SK-N-SH (cell line): ENCODE measurements at regions of chr14 and their contacts with region 1.

Region 1: GRCh38 chr14:49497725-49498348 is 88.3 kb downstream of the RPS29 start:
- DNase-seq: peak; percentile 52
- H3K4me3 ChIP-seq: no peak overlapping the region; a peak in 1 of 4 replicates
- H3K27ac ChIP-seq: no peak overlapping the region
- H3K4me1 ChIP-seq: no peaks in the 10 kb centered on the region
- H3K27me3 ChIP-seq: peaks cover 11% of the 10 kb centered on the region; the same call in 1 of the 2 replicates
- CTCF ChIP-seq: peak; percentile 87
- EP300 ChIP-seq: no peak
- RAD21 ChIP-seq: peak; percentile 83

Region 2: DNA sequence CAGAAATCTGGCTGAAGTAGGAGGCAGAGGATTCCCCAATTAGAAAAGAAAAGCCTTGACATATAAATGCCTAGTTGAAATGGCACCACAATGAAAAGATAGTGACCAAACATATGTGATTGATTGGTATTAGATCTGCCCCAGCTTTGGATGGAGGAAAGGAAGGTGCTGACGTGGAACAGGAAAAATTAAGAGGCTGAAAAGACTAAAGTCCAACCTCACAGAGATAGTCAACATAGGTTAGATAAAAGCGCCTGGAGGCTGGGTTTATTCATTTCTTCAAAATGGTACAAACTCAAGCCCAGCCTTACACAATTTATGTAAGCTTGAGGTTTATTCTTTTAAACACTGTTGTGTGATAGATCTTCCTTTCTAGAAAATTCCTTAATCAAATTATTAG is 41.2 kb before region 1 on chr14:
- CTCF ChIA-PET with region 1: interaction called, 26 read pairs
- POLR2A ChIA-PET with region 1: no interaction called
- DNase-seq: no peak
- H3K4me3 ChIP-seq: no peak overlapping the region
- H3K27ac ChIP-seq: no peak overlapping the region
- H3K4me1 ChIP-seq: peaks cover 0 to 4% of the 10 kb centered on the region in 2 experiments; a peak in 1 of 4 replicates
- H3K27me3 ChIP-seq: no peaks in the 10 kb centered on the region
- CTCF ChIP-seq: no peak
- EP300 ChIP-seq: no peak
- RAD21 ChIP-seq: no peak

Region 3: DNA sequence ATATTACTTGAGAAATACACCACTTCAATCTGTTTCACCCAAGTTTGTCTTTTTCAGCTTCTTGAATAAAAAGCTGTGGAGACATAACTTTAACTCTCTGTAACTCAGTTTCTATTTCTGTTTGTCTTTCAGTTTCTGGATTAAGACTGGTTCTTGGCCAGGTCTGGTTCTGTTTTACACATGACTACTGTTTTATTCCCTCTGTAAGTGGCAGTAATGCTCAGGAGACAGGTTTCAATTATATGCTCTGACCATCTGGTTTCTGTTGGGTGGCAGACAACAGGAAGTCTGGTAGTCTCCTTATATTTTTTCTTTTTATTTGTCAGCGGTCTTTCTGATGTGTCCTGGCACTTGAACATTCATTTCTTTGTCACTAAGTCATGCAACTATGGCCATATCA is 14.6 kb before region 1 on chr14:
- CTCF ChIA-PET with region 1: interaction called, 83 read pairs
- POLR2A ChIA-PET with region 1: no interaction called
- DNase-seq: peak; percentile 31
- H3K4me3 ChIP-seq: no peak overlapping the region
- H3K27ac ChIP-seq: peak overlapping the region in 1 of 2 experiments; percentile 60; a peak in 2 of 4 replicates
- H3K4me1 ChIP-seq: peaks cover 0 to 8% of the 10 kb centered on the region in 2 experiments; a peak in 2 of 4 replicates
- H3K27me3 ChIP-seq: no peaks in the 10 kb centered on the region; the same call in 1 of the 2 replicates
- CTCF ChIP-seq: no peak
- EP300 ChIP-seq: no peak
- RAD21 ChIP-seq: no peak

Region 4: GRCh38 chr14:49516286-49516685 is 18.4 kb after region 1 on chr14:
- CTCF ChIA-PET with region 1: interaction called, 11 read pairs
- POLR2A ChIA-PET with region 1: no interaction called
- DNase-seq: no peak
- H3K4me3 ChIP-seq: no peak overlapping the region
- H3K27ac ChIP-seq: no peak overlapping the region
- H3K4me1 ChIP-seq: no peaks in the 10 kb centered on the region
- H3K27me3 ChIP-seq: no peaks in the 10 kb centered on the region; the same call in 1 of the 2 replicates
- CTCF ChIP-seq: no peak
- EP300 ChIP-seq: no peak
- RAD21 ChIP-seq: no peak

Region 5: GRCh38 chr14:49550286-49551184 is 52.7 kb after region 1 on chr14:
- CTCF ChIA-PET with region 1: interaction called, 12 read pairs
- POLR2A ChIA-PET with region 1: no interaction called
- DNase-seq: peak; percentile 26
- H3K4me3 ChIP-seq: no peak overlapping the region
- H3K27ac ChIP-seq: no peak overlapping the region
- H3K4me1 ChIP-seq: peaks cover 0 to 4% of the 10 kb centered on the region in 2 experiments; a peak in 1 of 4 replicates
- H3K27me3 ChIP-seq: no peaks in the 10 kb centered on the region
- CTCF ChIP-seq: peak; percentile 45
- EP300 ChIP-seq: no peak
- RAD21 ChIP-seq: peak; percentile 58

Region 6: GRCh38 chr14:49594347-49595089 is 96.7 kb after region 1 on chr14:
- CTCF ChIA-PET with region 1: no interaction called
- POLR2A ChIA-PET with region 1: no interaction called
- DNase-seq: no peak
- H3K4me3 ChIP-seq: no peak overlapping the region
- H3K27ac ChIP-seq: peak overlapping the region in 1 of 2 experiments; percentile 56; a peak in 2 of 4 replicates
- H3K4me1 ChIP-seq: peaks cover 2 to 8% of the 10 kb centered on the region in 2 experiments; a peak in 2 of 4 replicates
- H3K27me3 ChIP-seq: no peaks in the 10 kb centered on the region
- CTCF ChIP-seq: no peak
- EP300 ChIP-seq: peak in 1 of 2 experiments; percentile 51; a peak in 1 of 4 replicates
- RAD21 ChIP-seq: no peak

Region 7: DNA sequence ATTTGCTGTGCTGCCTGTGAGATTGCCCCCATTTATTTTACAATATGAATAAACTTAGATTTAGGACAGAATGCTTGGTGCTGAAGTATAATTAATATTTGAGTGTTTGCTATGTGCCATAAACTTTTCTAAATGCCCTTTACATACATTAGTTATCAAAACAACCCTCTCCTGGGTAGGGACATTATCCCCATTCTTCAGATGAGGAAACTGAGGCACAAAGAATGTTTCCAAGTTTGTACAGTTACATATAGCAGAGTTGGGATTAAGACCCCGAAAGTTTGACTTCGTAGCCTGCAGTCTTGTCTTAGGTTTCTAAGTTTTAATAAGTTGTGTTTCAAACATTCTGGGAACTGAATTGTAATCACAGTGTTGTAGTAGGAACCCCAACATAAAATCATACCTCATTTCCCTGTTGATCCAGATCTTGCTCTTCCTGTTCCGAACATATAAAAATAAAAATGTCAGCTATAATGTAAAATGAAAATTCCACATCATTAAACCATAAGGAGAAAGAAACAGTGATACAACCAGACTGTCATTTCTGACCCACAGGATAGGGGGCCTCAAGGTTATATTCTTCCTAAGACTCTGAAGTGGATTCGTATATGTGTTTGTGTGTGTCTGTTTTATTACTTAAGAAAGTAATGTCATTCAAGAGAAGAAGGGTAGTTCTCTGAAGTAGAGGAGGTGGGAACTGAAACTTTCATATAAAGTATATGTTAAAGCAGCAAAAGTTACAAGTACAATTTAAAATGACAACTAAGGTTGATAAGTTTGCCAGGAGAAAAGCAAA is 288.7 kb after region 1 on chr14:
- CTCF ChIA-PET with region 1: no interaction called
- POLR2A ChIA-PET with region 1: no interaction called
- DNase-seq: no peak
- H3K4me3 ChIP-seq: no peak overlapping the region
- H3K27ac ChIP-seq: peak overlapping the region in 1 of 2 experiments; percentile 10; a peak in 1 of 4 replicates
- H3K4me1 ChIP-seq: no peaks in the 10 kb centered on the region
- H3K27me3 ChIP-seq: no peaks in the 10 kb centered on the region
- CTCF ChIP-seq: no peak
- EP300 ChIP-seq: no peak
- RAD21 ChIP-seq: no peak

Region 8: DNA sequence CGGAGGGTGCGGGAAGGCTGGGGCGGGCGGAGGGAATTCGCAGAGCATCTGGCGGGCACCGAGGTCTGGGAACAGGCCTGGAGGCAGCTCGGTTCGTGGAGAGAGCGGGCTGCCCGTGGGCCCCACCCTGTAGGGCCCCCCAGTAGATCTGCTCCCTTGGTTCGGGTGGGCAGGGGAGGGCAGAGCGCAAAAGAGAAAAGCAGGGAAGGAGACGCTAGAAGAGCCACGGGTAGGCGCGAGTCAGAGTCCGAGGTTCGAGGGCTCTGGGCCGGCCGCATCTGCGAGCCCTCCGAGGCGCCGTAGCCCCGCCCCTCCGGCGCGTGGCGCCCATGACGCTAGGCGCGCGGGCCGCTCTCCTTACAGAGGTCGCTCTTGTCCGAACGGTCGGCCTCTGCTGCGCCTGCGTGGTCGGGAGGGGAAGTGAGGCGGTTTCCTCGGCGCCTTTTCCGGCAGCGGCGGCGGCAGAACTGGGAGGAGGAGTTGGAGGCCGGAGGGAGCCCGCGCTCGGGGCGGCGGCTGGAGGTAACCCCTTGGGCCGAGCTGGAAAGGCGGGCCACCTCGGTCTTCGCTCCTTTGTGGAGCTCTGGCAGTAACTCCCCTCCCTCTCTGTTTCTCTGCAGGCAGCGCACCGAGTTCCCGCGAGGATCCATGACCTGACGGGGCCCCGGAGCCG is 394.9 kb after region 1 on chr14 and contains the start of gene ARF6:
- CTCF ChIA-PET with region 1: no interaction called
- POLR2A ChIA-PET with region 1: no interaction called
- DNase-seq: peak; percentile 98
- H3K4me3 ChIP-seq: peak within 1 kb of the TSS; percentile 85 to 91
- H3K27ac ChIP-seq: peak within 1 kb of the TSS; percentile 93 to 98
- H3K4me1 ChIP-seq: peaks cover 12 to 19% of the 10 kb centered on the region in 2 experiments
- H3K27me3 ChIP-seq: no peaks in the 10 kb centered on the region
- CTCF ChIP-seq: no peak
- EP300 ChIP-seq: peak; percentile 2 to 4; a peak in 1 of 4 replicates
- RAD21 ChIP-seq: no peak; the same call in none of the 2 replicates
- polyA plus RNA-seq, gene ARF6: 32.2 and 45.2 TPM in 2 replicates